ENCODE measurements at regions of chr12 and their contacts with region 1.

Region 1: DNA sequence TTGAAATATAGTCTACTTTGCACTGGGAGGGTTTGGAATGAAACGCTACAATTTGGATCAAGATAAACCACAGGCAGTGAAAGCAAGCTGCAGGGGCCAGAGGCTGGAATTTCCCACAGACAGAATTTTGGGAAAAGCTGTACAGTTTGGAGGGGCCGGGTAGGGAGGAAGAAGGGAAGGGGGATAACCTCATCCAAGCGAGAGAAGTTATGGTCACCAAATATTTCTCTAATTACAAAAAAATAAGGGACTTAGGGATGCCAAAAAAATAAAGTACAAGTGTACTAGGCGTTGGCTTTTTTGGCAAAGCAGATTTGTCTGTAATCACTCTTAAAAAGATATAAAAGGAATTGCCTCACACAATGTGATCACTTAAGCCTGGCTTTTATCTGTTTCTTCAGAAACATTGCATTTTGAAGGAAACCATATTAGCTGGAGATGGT is 31.2 kb upstream of the ADGRD1 start:
- DNase-seq: no peak
- ATAC-seq: peak in 7 of 8 donors; percentile 15 to 70 (median 61)
- H3K4me3 ChIP-seq: no peak overlapping the region
- H3K27ac ChIP-seq: peak overlapping the region in 8 of 10 donors; percentile 22 to 64 (median 54)
- H3K4me1 ChIP-seq: peaks cover 0 to 9% (median 0%) of the 10 kb centered on the region in 9 donors
- H3K27me3 ChIP-seq: peaks cover 0 to 6% (median under 1%) of the 10 kb centered on the region in 7 donors
- CTCF ChIP-seq: no peak

Region 2: DNA sequence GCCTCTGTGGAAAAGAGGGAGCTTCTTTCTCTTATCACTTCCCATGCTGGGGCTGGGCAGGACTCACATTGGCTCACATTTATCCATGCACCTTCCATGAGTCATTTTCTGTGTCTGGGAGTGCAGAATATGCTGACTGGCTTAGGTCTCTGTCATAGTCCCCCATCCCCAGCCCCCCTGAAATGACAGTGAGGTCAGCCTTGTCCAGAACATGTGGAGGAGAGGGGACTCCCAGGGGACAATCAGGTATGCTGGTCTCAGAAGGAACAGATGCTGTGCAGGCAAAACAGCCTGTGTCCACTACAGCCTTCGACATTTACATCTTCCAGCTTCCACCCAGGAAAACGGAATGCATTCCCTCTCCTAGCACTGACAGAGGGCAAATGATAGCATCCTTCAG is 66.2 kb after region 1 on chr12:
- intact Hi-C with region 1: loop called in 1 of 10 experiments (anchors 2 kb)
- DNase-seq: no peak
- ATAC-seq: peak in 3 of 8 donors; percentile 7 to 25 (median 12)
- H3K4me3 ChIP-seq: no peak overlapping the region
- H3K27ac ChIP-seq: no peak overlapping the region
- H3K4me1 ChIP-seq: peaks cover 0 to 4% (median 0%) of the 10 kb centered on the region in 9 donors
- H3K27me3 ChIP-seq: no peaks in the 10 kb centered on the region
- CTCF ChIP-seq: no peak